Activated T-helper 1 cell treated with anti-CD3 and anti-CD28 coated beads, Interleukin-12 subunit alpha, Interleukin-12 subunit beta, Interleukin-2, Interleukin-4 antibody, amounts not matched to agents 30 ng/mL and 10 ng/mL and 1 ng/mL, durations not matched to agents 14 hours and 24 hours and 36 hours (primary cell): ENCODE measurements at regions of chr2 and their contacts with region 1.

Region 1: GRCh38 chr2:68594674-68595492 is 48.5 kb upstream of the PROKR1 start:
- DNase-seq: peak; percentile 35
- H3K4me3 Mint-ChIP-seq: no peak overlapping the region
- H3K27ac Mint-ChIP-seq: no peak overlapping the region
- H3K4me1 Mint-ChIP-seq: peaks cover 8% of the 10 kb centered on the region
- H3K27me3 Mint-ChIP-seq: peaks cover 6% of the 10 kb centered on the region

Region 2: GRCh38 chr2:67366832-67367412 is 1228.0 kb before region 1 on chr2:
- intact Hi-C with region 1: no loop called
- DNase-seq: no peak
- H3K4me3 Mint-ChIP-seq: no peak overlapping the region
- H3K27ac Mint-ChIP-seq: no peak overlapping the region
- H3K4me1 Mint-ChIP-seq: no peaks in the 10 kb centered on the region
- H3K27me3 Mint-ChIP-seq: peaks cover 4% of the 10 kb centered on the region

Region 3: DNA sequence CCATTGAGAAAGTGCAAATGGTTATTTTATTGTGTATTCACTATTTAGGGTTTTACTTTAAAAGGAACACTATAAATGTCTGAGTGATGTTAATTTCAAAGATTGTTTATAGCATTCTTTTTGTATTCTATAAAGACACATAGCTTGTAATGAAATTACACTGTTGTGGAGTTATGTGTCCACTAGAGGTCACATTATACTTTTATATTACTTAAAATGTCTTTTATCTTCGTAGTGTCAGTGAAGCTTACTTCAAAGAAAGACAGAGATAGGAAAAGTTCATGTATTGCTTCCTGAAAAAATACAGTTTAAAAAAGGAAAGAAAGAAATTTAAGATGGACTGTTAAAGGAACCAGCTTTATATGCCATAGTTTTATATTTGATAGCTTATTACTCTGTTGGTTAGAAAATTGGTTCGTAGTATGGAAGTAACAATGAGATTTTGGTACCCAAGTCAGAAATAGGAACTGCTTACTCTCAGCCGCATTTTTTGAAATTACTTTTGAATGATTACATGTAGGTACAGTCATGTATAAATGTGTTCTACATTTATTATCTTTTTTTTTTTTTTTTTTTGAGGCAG is 107.0 kb before region 1 on chr2:
- intact Hi-C with region 1: loop called (anchors 1 kb)
- DNase-seq: no peak
- H3K4me3 Mint-ChIP-seq: no peak overlapping the region
- H3K27ac Mint-ChIP-seq: no peak overlapping the region
- H3K4me1 Mint-ChIP-seq: peaks cover 6% of the 10 kb centered on the region
- H3K27me3 Mint-ChIP-seq: peaks cover 4% of the 10 kb centered on the region

Region 4: DNA sequence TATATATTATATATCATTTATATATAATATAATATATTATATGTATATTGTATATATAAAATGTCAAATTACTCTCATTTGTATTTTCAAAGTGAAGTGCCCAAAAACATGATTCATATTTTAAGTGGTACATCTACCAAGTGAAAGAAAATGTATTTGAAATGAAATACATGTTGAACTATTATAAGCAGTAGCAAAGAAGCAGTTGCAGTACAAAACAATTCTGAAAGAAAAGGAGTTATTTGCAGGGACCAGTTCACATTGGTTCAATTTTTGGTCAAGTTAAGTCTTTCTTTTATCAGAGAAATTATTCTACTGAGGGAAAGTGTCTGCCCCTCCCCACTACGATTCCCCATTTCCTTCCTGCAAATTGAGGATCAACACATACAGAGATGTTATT is 75.6 kb before region 1 on chr2:
- intact Hi-C with region 1: loop called (anchors 5 kb)
- DNase-seq: no peak
- H3K4me3 Mint-ChIP-seq: no peak overlapping the region
- H3K27ac Mint-ChIP-seq: no peak overlapping the region
- H3K4me1 Mint-ChIP-seq: peaks cover 24% of the 10 kb centered on the region
- H3K27me3 Mint-ChIP-seq: no peaks in the 10 kb centered on the region

Region 5: DNA sequence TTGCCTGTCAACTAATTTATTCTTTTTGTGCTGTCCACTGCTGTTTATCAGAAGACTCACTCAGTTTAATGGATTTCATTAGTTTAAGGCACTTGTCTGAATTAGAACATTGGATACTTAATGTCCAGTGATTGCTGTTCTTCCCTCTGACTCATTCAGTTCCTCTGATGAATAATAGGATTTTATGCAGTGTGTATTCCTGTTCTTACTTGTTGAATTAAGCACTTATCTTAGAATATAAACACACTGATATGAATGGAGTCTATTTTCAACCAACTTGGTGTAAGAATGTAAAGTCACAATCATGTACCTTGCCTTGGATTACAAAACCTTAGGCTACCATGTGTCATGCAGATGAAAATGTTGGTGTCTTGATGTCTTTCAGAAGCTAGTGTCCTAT is 38.5 kb before region 1 on chr2:
- intact Hi-C with region 1: no loop called
- DNase-seq: no peak
- H3K4me3 Mint-ChIP-seq: no peak overlapping the region
- H3K27ac Mint-ChIP-seq: no peak overlapping the region
- H3K4me1 Mint-ChIP-seq: peaks cover 11% of the 10 kb centered on the region
- H3K27me3 Mint-ChIP-seq: peaks cover 1% of the 10 kb centered on the region

Region 6: DNA sequence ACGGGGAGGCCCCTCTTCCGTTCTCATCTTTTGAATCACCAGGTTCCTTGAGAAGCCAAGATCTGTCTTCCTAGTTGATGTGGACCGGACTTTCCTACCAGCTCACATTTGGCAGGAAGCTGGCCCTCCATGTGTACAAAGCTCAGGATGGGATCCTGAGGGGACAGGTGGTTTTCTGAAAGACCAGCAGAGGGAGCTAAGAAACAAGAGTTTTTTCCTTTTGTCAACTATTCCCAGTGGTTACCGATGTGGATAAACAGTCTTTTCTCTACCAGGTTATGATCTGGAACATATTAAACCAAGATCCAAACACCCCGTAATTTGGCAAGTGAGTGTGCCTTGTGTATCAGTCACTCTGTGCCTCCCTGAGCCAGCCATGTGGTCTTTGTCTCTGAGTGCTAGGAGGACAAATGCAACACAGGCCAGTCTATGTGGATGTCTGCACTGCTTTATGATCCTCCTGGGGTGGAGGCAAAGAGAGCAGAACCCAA is 114.6 kb after region 1 on chr2:
- intact Hi-C with region 1: loop called (anchors 2 kb)
- DNase-seq: no peak
- H3K4me3 Mint-ChIP-seq: no peak overlapping the region
- H3K27ac Mint-ChIP-seq: no peak overlapping the region
- H3K4me1 Mint-ChIP-seq: peaks cover 36% of the 10 kb centered on the region
- H3K27me3 Mint-ChIP-seq: peaks cover 6% of the 10 kb centered on the region

Region 7: GRCh38 chr2:69278366-69278765 is 683.5 kb after region 1 on chr2:
- intact Hi-C with region 1: no loop called
- DNase-seq: no peak
- H3K4me3 Mint-ChIP-seq: no peak overlapping the region
- H3K27ac Mint-ChIP-seq: no peak overlapping the region
- H3K4me1 Mint-ChIP-seq: no peaks in the 10 kb centered on the region
- H3K27me3 Mint-ChIP-seq: peaks cover 8% of the 10 kb centered on the region